Activated CD4-positive, alpha-beta memory T cell treated with anti-CD3 and anti-CD28 coated beads for 36 hours (primary cell): ENCODE measurements at regions of chr6 and their contacts with region 1.

Region 1: GRCh38 chr6:43667245-43668150 is 20.1 kb downstream of the MRPS18A start:
- DNase-seq: peak; percentile 87
- H3K4me3 Mint-ChIP-seq: no peak overlapping the region
- H3K27ac Mint-ChIP-seq: peak overlapping the region; percentile 24
- H3K4me1 Mint-ChIP-seq: peaks cover 43% of the 10 kb centered on the region
- H3K27me3 Mint-ChIP-seq: no peaks in the 10 kb centered on the region

Region 2: GRCh38 chr6:43521836-43522235 is 145.7 kb before region 1 on chr6:
- CTCF ChIA-PET with region 1: no interaction called
- POLR2A ChIA-PET with region 1: no interaction called
- intact Hi-C with region 1: no loop called
- DNase-seq: no peak
- H3K4me3 Mint-ChIP-seq: no peak overlapping the region
- H3K27ac Mint-ChIP-seq: no peak overlapping the region
- H3K4me1 Mint-ChIP-seq: no peaks in the 10 kb centered on the region
- H3K27me3 Mint-ChIP-seq: no peaks in the 10 kb centered on the region

Region 3: DNA sequence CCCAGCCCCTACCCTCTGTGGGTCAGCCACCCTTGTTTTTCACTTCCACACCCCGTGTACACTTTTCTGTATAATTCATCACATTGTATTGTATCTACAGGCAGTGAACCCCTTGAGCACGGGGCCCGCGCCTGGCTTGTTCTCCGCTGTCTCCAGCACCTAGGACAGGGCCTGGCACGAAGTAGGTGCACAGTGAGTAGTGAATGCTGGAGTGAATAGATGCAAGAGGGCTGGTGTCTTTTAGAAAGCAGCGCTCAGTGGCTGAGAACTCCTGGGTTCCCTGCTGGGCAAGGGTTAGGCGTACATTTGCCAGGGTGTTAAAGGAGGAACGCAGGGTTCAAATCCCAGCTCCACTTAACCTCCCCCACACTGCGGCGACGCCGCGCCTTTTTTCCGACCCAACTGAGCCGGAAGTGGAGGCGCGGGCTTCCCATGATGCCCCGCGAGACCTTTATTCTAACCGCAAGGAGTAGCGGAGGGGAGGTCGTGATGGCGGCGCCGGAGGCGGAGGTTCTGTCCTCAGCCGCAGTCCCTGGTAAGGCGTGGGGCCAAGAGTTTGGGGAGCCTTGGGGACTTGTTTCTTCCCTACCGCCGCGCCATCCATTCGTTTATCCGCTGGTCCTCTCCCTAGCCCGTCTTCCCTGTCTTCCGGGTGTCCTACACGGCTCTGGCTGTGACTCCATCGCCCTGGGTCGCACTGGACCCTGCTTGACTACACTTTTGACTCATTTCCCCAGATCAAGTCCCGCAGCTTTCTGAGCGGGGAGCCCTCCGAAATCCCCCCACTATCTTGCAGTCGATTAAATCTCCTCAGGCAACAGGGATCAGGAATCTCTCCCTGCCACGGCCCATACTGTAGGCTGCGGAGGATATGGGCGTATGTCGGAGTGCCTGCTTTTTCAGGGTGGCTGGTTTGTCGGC is 31.9 kb before region 1 on chr6 and contains the start of gene MAD2L1BP:
- CTCF ChIA-PET with region 1: interaction called, 12 read pairs
- POLR2A ChIA-PET with region 1: interaction called, 4 read pairs
- intact Hi-C with region 1: no loop called
- DNase-seq: peak; percentile 94
- H3K4me3 Mint-ChIP-seq: peak within 1 kb of the TSS; percentile 99
- H3K27ac Mint-ChIP-seq: peak within 1 kb of the TSS; percentile 97
- H3K4me1 Mint-ChIP-seq: peaks cover 45% of the 10 kb centered on the region
- H3K27me3 Mint-ChIP-seq: no peaks in the 10 kb centered on the region
- total RNA-seq, gene MAD2L1BP: 29.1 to 31.6 TPM

Region 4: DNA sequence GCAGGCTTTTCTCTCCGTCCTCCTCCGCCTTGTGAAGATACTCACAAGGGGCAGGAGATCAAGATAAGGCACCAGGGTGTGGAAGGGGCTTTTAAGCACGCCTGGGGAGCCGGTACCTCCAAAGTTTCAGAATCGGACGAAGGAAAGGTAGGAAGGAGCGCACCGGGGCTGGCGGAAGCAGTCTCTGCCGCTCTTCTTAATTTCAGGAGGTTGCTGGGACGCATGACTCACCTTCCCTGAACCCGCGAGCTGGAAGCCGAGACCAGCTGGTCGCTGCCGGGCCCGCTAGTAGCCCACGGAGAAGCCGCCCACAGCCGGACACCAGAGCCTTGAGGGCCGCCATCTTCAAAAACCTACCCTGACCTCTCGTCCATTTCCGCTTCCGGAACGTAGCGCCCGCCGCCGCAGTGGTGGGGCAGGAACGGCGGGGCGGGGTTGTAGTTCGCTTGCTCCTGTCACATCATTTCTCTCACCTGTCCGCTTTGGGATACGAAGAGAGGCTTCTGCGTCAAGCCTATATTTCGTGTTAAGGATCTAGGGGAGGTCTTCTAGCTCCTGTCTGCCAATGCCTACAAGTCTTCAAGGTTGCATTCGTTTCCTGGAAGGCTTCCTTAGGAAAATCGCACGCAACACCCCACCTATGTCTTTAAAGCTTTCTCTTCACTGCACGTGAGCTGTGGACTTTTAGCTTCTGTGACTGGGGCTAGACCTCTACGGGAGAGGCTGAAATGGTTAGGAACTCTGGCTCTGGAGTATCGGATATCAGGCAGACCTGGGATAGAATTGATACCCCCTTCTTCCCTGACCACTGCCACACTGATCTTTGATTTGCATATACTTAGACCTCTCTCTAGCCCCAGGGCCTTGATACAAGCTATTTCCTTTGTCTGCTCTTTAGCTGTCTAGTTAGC is 20.2 kb after region 1 on chr6 and contains the start of gene MRPS18A:
- CTCF ChIA-PET with region 1: interaction called, 24 read pairs
- POLR2A ChIA-PET with region 1: interaction called, 4 read pairs
- intact Hi-C with region 1: loop called (anchors 1 kb)
- DNase-seq: peak; percentile 92
- H3K4me3 Mint-ChIP-seq: peak within 1 kb of the TSS; percentile 94
- H3K27ac Mint-ChIP-seq: peak within 1 kb of the TSS; percentile 83
- H3K4me1 Mint-ChIP-seq: peaks cover 45% of the 10 kb centered on the region
- H3K27me3 Mint-ChIP-seq: no peaks in the 10 kb centered on the region
- total RNA-seq, gene MRPS18A: 46.9 to 50.5 TPM

Region 5: DNA sequence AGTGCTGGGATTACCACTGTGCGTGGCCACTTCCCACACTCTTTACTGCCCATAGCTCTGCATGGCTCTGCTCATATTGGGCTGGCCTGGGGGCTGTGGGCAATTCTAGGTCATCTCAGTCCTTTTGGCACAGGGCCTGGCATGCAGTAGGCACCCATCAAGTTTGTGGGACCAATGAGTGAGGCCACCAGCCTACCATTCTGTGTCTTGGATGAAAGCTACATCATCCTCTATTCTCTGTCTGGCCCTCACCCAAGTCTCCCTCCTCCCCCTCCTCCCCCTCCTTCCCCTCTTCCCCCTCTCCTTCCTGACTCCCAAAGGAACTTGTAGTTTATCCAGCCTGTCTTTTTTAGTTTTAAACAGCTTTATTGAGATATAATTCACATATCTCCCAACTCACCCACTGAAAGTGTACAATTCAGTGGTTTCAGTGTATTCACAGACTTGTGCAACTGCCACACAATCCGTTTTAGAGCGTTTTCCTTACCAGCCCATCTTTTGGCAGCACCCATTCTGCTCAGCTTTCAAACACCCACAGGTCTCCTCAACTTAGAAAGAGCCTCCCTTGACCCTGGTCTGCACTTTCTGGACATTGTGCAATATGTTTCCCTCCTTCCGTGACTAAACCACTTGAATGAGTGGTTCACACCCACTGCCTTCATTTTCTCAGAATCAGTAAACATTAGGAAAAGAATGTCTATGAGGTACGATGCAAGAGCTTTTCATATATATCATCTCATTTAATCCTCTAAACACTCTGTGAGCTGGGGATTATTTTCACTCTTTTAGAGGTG is 41.6 kb after region 1 on chr6:
- CTCF ChIA-PET with region 1: interaction called, 13 read pairs
- POLR2A ChIA-PET with region 1: interaction called, 7 read pairs
- intact Hi-C with region 1: loop called (anchors 5 kb)
- DNase-seq: peak; percentile 46
- H3K4me3 Mint-ChIP-seq: no peak overlapping the region
- H3K27ac Mint-ChIP-seq: peak overlapping the region; percentile 75
- H3K4me1 Mint-ChIP-seq: peaks cover 19% of the 10 kb centered on the region
- H3K27me3 Mint-ChIP-seq: peaks cover 32% of the 10 kb centered on the region

Region 6: DNA sequence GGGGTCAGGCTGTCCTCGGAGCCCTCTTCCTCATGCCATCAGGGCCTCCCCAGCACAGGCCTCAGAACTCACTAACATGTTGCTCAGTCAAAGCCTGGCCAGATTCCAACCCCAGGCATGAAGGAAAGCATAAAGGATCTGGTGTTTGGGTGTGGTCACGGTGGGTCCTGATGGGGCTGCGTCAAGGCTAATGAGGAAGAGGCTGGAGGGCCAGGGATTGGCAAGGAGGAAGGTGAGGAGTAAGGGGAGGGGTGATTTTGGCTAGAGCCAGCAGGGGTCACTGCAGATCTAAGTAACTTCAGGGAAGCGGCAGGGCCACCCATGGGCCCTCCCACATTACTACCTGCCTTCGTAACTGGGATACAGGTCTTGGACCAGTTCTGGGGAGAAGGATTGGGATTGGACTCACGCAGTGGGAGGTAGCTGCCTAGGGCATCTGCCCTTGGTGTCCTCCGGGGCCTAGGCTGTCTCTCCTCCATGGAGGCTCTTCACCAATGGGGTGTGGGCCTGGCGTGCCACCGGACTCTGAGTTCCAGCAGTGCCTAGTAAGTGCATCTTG is 56.3 kb after region 1 on chr6:
- CTCF ChIA-PET with region 1: interaction called, 10 read pairs
- POLR2A ChIA-PET with region 1: no interaction called
- intact Hi-C with region 1: loop called (anchors 2 kb)
- DNase-seq: peak; percentile 86
- H3K4me3 Mint-ChIP-seq: no peak overlapping the region
- H3K27ac Mint-ChIP-seq: no peak overlapping the region
- H3K4me1 Mint-ChIP-seq: peaks cover 24% of the 10 kb centered on the region
- H3K27me3 Mint-ChIP-seq: no peaks in the 10 kb centered on the region

Region 7: GRCh38 chr6:44074439-44075136 is 407.1 kb after region 1 on chr6:
- CTCF ChIA-PET with region 1: interaction called, 48 read pairs
- POLR2A ChIA-PET with region 1: no interaction called
- intact Hi-C with region 1: loop called (anchors 1 kb)
- DNase-seq: peak; percentile 81
- H3K4me3 Mint-ChIP-seq: peak overlapping the region; percentile 81
- H3K27ac Mint-ChIP-seq: peak overlapping the region; percentile 24
- H3K4me1 Mint-ChIP-seq: peaks cover 15% of the 10 kb centered on the region
- H3K27me3 Mint-ChIP-seq: peaks cover 14% of the 10 kb centered on the region